Activated B cell treated with CpG ODN at 0.5 μM for 24 hours (primary cell): ENCODE measurements at regions of chr1 and their contacts with region 1.

Region 1: GRCh38 chr1:225777583-225778336 is at the start of gene SRP9:
- DNase-seq: peak; percentile 94
- ATAC-seq: peak; percentile 97
- H3K4me3 Mint-ChIP-seq: no peak within 1 kb of the TSS
- H3K27ac Mint-ChIP-seq: no peak within 1 kb of the TSS
- H3K4me1 Mint-ChIP-seq: peaks cover 37% of the 10 kb centered on the region
- H3K27me3 Mint-ChIP-seq: no peaks in the 10 kb centered on the region
- CTCF ChIP-seq: no peak
- total RNA-seq, gene SRP9: 141 and 143 TPM in 2 replicates

Region 2: GRCh38 chr1:225428068-225428880 is 349.5 kb before region 1 on chr1:
- CTCF ChIA-PET with region 1: no interaction called
- POLR2A ChIA-PET with region 1: interaction called, 6 read pairs
- intact Hi-C with region 1: loop called (anchors 5 kb)
- DNase-seq: peak; percentile 88
- ATAC-seq: peak; percentile 92
- H3K4me3 Mint-ChIP-seq: peak overlapping the region; percentile 89
- H3K27ac Mint-ChIP-seq: peak overlapping the region; percentile 90
- H3K4me1 Mint-ChIP-seq: peaks cover 48% of the 10 kb centered on the region
- H3K27me3 Mint-ChIP-seq: no peaks in the 10 kb centered on the region
- CTCF ChIP-seq: no peak

Region 3: DNA sequence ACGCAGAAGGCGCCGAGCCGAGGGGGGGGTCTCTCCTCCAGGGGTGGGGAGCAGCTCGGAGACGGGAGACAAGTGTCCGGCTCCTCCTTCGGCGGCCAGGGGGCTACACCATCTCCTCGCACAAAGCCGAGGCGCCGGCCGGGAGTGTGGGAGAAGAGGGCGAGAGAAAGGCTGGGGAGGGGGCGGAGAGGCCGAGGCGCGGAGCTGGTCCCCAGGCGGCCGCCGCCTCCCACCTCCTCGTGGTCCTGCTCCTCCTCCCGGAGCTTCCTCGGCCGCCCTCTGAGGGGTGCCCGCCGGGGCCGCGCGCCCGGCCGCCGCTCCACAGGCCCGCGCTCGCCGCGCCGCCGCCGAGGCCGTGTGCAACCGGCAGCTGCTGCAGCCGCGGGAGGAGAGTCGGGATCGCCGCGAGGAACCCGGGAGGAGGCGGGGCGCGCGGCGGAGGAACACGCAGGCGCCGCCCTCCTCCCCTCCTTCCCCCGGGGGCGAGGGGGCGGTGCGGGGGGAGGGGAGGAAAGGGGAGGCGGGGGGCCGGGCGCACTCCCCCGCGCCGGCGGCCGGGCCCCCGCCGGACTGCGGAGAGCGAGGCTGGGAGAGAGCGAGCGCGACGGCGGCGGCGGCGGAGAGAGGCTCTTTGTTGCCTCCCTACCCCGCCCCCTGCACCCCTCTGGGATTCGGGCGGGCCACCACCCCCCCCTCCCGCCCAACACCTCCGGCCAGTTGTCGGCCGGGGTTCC is 124.9 kb before region 1 on chr1 and contains the start of gene ENAH:
- CTCF ChIA-PET with region 1: no interaction called
- POLR2A ChIA-PET with region 1: interaction called, 10 read pairs
- intact Hi-C with region 1: loop called (anchors 2 kb)
- DNase-seq: peak; percentile 49
- ATAC-seq: peak; percentile 69
- H3K4me3 Mint-ChIP-seq: peak within 1 kb of the TSS; percentile 92
- H3K27ac Mint-ChIP-seq: peak within 1 kb of the TSS; percentile 24
- H3K4me1 Mint-ChIP-seq: peaks cover 13% of the 10 kb centered on the region
- H3K27me3 Mint-ChIP-seq: peaks cover 9% of the 10 kb centered on the region
- CTCF ChIP-seq: no peak
- total RNA-seq, gene ENAH: 1.2 and 1.4 TPM in 2 replicates

Region 4: GRCh38 chr1:225733254-225733653 is 44.5 kb before region 1 on chr1:
- CTCF ChIA-PET with region 1: no interaction called
- POLR2A ChIA-PET with region 1: no interaction called
- intact Hi-C with region 1: no loop called
- DNase-seq: no peak
- ATAC-seq: no peak
- H3K4me3 Mint-ChIP-seq: no peak overlapping the region
- H3K27ac Mint-ChIP-seq: no peak overlapping the region
- H3K4me1 Mint-ChIP-seq: no peaks in the 10 kb centered on the region
- H3K27me3 Mint-ChIP-seq: no peaks in the 10 kb centered on the region
- CTCF ChIP-seq: no peak

Region 5: DNA sequence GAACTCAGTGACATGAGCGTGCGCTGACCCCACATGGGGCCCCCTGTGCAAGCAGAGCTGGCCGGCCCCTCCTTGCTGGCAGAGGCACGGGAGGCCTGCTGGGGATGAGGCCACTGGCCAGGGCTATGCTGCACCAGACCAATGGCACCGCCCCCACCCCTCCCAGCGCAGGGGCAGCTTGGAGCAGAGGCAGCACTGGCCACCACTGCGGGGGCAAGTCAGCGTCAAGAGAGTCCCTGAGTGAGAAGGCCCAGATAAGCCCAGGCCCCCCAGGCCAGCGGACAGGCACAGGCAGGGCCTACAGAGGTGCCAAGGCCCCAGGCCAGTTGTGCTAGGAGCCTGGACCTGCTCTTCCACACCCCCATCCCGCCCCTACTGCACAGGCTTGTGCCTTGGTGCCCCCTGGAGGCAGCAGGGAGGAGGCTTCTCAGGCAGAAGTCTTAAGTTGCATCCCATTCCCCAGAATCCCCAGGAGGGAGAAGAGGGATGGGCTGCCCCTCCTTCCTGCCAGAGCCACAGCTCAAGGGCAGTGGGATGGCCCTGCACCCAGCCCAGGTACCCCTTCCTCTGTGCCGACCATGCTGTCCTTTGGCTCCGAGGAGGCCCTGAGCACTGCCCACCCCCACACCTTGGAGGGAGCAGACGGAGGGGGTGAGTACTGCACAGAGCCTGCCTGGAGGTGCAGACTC is 68.0 kb after region 1 on chr1:
- CTCF ChIA-PET with region 1: interaction called, 4 read pairs
- POLR2A ChIA-PET with region 1: interaction called, 10 read pairs
- intact Hi-C with region 1: loop called (anchors 1 kb)
- DNase-seq: no peak
- ATAC-seq: no peak
- H3K4me3 Mint-ChIP-seq: no peak overlapping the region
- H3K27ac Mint-ChIP-seq: peak overlapping the region; percentile 56
- H3K4me1 Mint-ChIP-seq: peaks cover 47% of the 10 kb centered on the region
- H3K27me3 Mint-ChIP-seq: no peaks in the 10 kb centered on the region
- CTCF ChIP-seq: no peak

Region 6: DNA sequence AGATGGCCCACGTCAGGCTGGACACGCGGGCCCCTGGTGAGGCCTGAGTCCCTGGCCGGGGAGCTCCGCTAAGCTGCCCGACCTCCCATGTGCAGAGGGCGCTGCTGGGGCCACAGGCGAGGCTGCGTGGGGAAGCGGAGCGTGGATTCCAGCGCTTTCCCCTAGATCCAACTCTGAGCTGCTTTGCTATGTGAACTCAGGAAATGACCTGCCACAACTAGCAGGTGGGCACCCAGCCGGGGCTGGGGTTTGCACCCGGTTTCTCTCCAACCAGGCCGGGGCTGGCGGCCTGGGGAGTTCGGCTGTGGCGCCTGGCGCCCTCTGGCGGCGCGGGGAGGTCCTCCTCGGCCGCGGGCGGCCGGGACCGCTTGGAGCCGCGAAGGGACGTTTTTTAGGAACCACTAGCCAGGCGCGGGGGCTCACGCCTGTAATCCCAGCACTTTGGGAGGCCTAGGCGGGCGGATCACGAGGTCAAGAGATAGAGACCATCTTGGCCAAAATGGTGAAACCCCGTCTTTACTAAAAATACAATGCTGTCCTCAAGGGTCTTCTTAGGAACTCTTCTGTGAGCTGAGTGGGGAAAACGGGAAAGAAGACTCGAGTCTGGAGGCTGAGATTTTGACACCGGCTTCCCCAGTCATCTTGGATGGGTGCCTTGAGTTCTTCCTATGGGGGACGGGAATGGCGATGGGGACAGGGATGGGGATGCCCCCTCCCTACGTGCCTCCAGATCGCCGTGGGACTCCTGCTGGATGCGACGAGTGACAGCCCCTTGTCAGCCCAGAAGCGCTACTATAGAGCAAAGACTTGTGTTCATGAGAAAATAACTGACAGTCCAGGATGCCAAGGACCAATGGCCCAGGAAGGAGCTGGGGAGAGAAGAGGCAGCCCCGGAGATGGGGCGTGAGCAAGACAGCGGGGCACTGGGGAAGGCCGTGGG is 133.7 kb after region 1 on chr1:
- CTCF ChIA-PET with region 1: interaction called, 13 read pairs
- POLR2A ChIA-PET with region 1: interaction called, 12 read pairs
- intact Hi-C with region 1: loop called (anchors 1 kb)
- DNase-seq: peak; percentile 66
- ATAC-seq: peak; percentile 90
- H3K4me3 Mint-ChIP-seq: no peak overlapping the region
- H3K27ac Mint-ChIP-seq: no peak overlapping the region
- H3K4me1 Mint-ChIP-seq: peaks cover 23% of the 10 kb centered on the region
- H3K27me3 Mint-ChIP-seq: no peaks in the 10 kb centered on the region
- CTCF ChIP-seq: peak; percentile 40

Region 7: DNA sequence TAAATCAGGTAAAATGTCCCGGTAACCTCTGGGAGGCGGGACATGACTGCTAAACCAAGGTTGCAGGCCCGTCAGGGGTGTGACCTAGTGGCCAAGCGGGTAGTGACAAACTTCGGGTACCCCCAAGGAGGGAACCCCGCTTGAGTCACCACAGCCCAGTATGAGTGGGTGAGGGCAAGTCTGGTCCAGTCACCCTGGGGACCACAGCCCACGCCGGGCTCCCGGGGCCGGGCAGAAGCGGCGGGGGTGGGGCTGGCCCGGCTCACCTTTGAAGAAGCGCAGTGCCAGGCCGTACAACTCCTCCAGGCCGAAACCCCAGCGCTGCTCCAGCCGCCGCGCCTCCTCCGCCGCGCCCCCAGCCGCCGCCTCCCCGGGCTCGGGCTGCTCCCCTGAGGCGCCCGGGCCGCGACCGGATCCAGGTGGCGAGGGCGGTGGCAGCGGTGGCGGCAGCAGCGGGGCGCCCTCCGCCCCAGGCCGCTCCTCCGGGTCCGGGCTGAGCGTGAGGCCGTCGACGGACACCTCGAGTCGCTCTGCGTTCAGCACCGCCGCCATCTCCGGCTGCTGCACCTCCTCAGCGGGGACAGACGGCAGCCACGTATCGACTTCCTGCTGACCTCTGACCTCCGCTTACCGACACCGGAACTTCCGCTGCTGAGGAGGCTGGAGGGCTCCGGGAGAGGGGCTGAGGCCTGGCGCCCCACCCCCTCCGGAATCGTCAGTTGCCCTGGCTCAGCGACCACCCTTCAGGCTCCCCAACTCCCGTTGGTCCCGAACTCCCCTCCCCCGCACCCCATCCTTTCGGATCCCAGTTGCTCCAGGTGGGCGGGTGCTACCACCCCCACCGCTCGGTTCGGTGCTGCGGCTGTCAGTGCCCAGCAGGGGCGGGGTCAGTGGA is 408.6 kb after region 1 on chr1 and contains the start of gene ACBD3:
- CTCF ChIA-PET with region 1: no interaction called
- POLR2A ChIA-PET with region 1: no interaction called
- intact Hi-C with region 1: loop called (anchors 5 kb)
- DNase-seq: peak; percentile 79
- ATAC-seq: peak; percentile 93
- H3K4me3 Mint-ChIP-seq: peak within 1 kb of the TSS; percentile 94
- H3K27ac Mint-ChIP-seq: peak within 1 kb of the TSS; percentile 94
- H3K4me1 Mint-ChIP-seq: peaks cover 45% of the 10 kb centered on the region
- H3K27me3 Mint-ChIP-seq: no peaks in the 10 kb centered on the region
- CTCF ChIP-seq: no peak
- total RNA-seq, gene ACBD3: 38.6 and 41.4 TPM in 2 replicates